KBM-7 (cell line): ENCODE measurements at regions of chr20 and their contacts with region 1.

Region 1: GRCh38 chr20:58850693-58851174 is at the start of gene GNAS-AS1:
- DNase-seq: no peak

Region 2: GRCh38 chr20:59222253-59223181 is 371.8 kb after region 1 on chr20:
- in situ Hi-C with region 1: loop called (anchors 25 kb)
- DNase-seq: peak; percentile 82

Region 3: DNA sequence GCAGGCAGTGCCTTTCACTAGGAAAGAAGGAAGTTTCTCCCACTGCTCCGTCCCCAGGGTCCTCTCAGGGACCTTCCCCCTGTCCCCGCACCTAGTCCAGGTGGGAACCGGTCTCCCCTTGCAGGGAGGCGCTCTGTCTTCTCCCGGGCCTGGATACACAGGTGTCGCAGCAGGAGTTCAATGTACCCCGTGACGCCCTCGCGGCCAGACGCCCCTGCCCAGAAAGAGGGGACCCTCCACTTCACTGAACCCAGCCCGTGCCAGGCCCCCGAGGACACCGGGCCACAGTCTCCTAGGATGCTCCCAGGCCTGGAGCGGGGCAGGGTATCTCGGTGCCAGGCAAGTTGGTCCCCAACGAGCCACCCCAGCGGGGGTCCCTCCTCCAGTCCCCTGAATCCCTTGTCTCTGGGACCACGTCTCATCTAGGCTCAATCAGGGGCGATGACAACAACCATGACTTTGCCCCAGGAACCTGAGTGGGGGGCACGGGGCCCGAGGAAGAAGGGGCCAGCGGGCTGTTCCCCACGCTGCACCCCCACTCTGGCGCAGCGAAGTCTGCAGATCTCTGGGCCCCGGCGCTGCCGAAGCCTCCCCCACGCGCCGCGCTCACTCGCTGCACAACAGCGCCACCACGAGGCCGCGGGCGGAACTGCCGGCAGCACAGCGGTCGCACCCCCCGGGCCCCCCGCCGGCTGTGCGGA is 552.7 kb after region 1 on chr20:
- in situ Hi-C with region 1: loop called (anchors 25 kb)
- DNase-seq: peak; percentile 50